ENCODE measurements at regions of chr2 and their contacts with region 1.

Region 1: DNA sequence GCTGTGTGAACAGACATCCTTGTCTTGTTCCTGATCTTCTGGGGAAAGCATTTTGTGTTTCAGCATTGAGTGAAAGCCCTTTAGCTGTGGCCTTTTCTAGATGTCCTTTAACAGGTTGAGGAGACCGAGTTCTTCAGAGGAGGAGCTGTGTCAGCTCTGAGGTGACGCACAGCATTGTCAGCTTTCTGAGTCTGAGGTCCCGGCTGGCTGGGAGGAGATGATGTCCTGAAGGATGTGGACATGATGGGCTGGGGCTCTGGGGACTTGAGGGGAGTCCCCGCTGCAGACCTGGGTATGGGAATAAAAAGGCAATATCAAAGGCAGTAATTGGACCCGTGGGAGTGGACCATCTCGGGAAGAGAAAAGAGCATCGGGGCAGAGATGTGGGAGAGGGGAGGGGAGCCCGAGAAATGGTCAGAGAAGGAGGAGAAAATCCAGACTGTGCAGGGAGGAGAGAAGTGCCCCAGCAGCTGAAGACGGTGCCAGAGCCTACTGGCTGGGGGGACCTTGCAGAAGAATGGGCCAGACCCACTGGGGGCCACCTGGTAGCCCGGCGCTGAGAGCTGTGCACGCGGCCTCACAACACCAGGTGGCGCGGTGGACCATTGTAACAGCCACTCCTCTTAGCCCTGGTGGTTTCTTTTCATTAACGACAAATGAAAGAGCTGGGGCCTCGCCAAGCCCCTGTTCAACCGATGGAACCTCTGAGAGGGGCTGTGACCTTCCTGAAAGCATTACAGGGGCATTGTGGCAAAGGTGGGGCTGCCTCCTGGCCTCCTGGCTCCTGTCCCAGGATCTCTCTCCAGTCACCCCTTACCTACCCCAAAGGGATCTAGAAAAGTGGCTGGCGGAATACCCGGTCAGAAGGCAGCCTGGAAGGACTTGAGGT is 61.6 kb downstream of the ST3GAL5 start:
- DNase-seq: peak; percentile 87
- ATAC-seq: peak; percentile 97
- H3K4me3 Mint-ChIP-seq: no peak overlapping the region; the same call in 1 of the 2 replicates
- H3K27ac Mint-ChIP-seq: no peak overlapping the region
- H3K4me1 Mint-ChIP-seq: peaks cover 13% of the 10 kb centered on the region
- H3K27me3 Mint-ChIP-seq: no peaks in the 10 kb centered on the region
- CTCF ChIP-seq: peak; percentile 62

Region 2: DNA sequence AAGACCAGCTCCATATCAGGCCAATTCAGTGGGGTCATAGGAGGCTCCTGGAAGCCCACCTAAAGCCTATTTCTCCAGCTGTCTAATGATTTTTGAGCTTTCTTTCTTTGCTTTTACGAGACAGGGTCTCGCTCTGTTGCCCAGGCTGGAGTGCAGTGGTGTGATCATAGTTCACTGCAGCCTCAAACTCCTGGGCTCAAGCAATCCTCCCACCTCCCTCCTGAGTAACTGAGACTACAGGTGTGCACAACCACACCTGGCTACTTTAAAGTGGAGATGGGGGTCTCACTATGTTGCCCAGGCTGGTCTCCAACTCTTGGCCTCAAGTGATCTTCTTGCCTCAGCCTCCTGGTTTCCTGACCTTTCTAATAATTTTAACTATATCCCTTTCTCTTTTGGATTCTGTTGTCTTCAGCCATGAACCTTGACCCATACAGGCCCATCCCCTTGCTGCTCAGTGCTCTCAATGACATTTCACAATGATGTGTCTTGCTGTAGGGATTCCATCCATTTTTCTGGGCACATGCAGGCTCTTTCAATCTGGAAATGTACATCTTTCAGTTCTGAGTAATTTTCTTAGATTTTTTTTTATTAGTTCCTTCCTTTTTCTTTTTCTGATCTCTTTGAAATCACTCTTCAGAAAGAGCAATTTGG is 103.4 kb before region 1 on chr2:
- CTCF ChIA-PET with region 1: interaction called, 24 read pairs
- POLR2A ChIA-PET with region 1: no interaction called
- DNase-seq: no peak
- ATAC-seq: no peak
- H3K4me3 Mint-ChIP-seq: no peak overlapping the region
- H3K27ac Mint-ChIP-seq: no peak overlapping the region
- H3K4me1 Mint-ChIP-seq: no peaks in the 10 kb centered on the region
- H3K27me3 Mint-ChIP-seq: no peaks in the 10 kb centered on the region; the same call in 1 of the 2 replicates
- CTCF ChIP-seq: no peak

Region 3: DNA sequence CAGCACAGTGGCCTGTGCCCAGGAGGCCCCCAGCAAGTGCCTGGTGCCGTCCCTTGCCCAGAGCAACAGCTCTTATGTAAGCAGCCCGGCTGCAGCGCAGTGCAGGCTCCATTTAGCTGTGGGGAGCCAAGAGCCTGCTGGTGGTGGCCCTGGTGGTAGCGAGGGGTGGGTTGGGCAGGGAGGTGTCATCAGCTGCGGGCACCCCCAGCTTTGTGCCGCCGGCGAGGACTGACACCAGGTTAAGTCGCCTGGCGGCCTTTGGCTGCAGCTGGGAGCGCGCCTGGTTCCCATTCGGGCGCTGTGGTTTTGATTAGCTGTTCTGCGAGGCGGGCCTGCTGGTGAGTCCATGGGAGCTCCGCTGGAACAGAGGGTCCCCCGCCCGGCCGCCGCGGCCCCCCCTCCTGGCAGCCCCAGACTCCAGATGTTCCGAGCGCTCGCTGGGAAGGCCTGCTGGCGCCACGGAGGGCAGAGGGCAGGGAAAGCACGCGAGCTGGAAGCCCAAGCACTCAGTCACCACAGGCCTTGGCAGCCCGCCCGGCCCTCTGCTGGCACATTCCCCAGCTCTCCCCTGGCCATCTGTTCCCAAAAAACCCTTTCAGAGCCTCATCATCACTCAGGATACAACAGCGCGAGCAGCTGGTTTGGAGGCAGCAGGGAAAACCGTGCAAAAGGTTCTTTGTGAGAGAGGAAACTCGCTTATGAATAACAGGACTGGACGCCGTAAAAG is 55.1 kb before region 1 on chr2:
- CTCF ChIA-PET with region 1: interaction called, 10 read pairs
- POLR2A ChIA-PET with region 1: interaction called, 3 read pairs
- DNase-seq: peak; percentile 59
- ATAC-seq: peak; percentile 51
- H3K4me3 Mint-ChIP-seq: no peak overlapping the region
- H3K27ac Mint-ChIP-seq: no peak overlapping the region
- H3K4me1 Mint-ChIP-seq: peaks cover 47% of the 10 kb centered on the region
- H3K27me3 Mint-ChIP-seq: peaks cover 26% of the 10 kb centered on the region
- CTCF ChIP-seq: no peak

Region 4: GRCh38 chr2:85846411-85846810 is 19.2 kb after region 1 on chr2:
- CTCF ChIA-PET with region 1: interaction called, 23 read pairs
- POLR2A ChIA-PET with region 1: no interaction called
- DNase-seq: no peak
- ATAC-seq: no peak
- H3K4me3 Mint-ChIP-seq: no peak overlapping the region
- H3K27ac Mint-ChIP-seq: no peak overlapping the region
- H3K4me1 Mint-ChIP-seq: no peaks in the 10 kb centered on the region
- H3K27me3 Mint-ChIP-seq: no peaks in the 10 kb centered on the region
- CTCF ChIP-seq: no peak

Region 5: DNA sequence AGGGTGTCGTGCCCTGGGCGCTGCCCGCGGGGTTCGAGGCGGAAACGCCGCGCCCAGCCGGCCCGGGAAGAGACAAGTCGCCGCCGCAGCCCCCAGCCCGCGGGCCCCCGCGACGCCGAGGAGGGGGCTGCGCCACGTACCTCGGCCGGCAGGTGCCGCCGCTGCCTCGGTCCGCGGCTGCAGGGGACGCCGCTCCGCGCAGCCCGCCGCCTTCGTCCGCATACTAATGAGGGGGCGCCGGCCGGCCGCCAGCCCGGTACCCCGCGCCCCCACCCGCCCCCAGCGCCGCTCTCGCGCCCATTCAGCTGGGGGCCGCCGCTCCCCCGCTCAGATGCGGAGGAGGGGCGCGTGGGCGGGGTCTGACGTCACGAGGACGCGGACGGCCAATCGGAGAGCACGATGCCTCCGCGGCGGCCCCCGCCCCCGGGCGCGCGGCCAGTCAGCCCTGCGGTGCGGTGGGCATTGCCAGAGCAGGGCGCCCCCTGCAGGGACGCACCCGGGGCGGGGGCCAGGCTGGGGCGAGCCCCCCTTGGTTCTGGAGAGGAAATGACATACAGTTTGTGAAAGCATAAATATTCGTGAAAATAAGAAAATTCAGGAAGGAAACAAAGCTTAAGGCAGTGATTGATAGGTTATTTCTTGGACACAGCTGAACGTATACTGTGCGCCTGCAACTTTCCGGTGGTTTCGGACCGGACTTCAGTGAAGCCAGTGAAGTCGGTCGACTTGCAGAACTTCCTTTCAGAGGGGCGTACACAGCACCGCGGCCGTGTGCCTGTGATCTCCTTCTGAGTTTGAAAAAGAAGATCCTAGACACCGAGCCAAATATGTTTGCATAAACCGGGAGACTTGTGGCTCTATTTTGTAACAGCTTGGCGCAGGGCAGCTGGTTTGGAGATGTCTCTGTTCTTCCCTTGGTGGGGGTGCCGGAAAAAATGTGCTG is 61.7 kb after region 1 on chr2 and contains the start of gene ST3GAL5:
- CTCF ChIA-PET with region 1: interaction called, 43 read pairs
- POLR2A ChIA-PET with region 1: no interaction called
- DNase-seq: peak; percentile 89
- ATAC-seq: peak; percentile 82
- H3K4me3 Mint-ChIP-seq: peak within 1 kb of the TSS; percentile 91
- H3K27ac Mint-ChIP-seq: no peak within 1 kb of the TSS
- H3K4me1 Mint-ChIP-seq: peaks cover 29% of the 10 kb centered on the region
- H3K27me3 Mint-ChIP-seq: peaks cover 29% of the 10 kb centered on the region
- CTCF ChIP-seq: no peak
- total RNA-seq, gene ST3GAL5: 5.9 to 6.8 TPM (median 6.2 TPM) in 3 replicates

Region 6: DNA sequence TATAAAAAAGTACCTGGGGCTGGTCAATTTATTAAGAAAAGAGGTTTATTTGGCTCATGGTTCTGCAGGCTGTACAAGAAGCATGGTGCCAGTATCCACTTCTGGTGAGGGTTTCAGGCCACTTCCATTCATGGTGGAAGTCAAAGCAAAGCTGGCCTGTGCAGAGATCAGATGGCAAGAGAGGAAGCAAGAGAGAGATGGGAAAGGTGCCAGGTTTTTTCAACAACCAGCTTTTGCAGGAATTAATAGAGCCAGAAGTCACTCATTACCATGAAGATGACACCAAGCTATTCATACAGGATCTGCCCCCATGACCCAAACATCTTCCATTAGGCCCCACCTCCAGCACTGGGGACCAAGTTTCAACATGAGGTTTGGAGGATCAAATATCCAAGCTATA is 118.3 kb after region 1 on chr2:
- CTCF ChIA-PET with region 1: no interaction called
- POLR2A ChIA-PET with region 1: no interaction called
- DNase-seq: no peak
- ATAC-seq: no peak
- H3K4me3 Mint-ChIP-seq: no peak overlapping the region
- H3K27ac Mint-ChIP-seq: no peak overlapping the region
- H3K4me1 Mint-ChIP-seq: no peaks in the 10 kb centered on the region
- H3K27me3 Mint-ChIP-seq: no peaks in the 10 kb centered on the region
- CTCF ChIP-seq: no peak

Region 7: DNA sequence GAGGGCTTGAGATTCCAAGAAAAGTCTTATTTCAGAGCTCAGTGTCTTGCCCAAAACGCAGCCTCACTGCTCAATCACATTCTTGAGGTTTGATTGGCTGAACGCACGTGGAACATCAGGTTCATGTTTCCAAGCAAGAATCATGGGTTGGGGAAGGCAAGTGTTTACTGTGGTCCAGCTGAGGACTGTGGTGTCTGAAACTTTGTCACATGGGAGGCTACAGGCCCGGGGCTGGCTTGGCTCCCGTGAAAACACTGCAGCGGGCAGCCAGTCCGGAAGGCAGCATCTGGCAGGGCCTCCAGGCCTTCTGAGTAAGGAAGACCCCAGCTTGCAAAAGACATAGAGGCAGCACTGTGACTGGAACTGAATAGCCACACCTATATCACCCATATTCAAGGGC is 193.8 kb after region 1 on chr2:
- CTCF ChIA-PET with region 1: interaction called, 29 read pairs
- POLR2A ChIA-PET with region 1: no interaction called
- DNase-seq: no peak
- ATAC-seq: no peak
- H3K4me3 Mint-ChIP-seq: no peak overlapping the region
- H3K27ac Mint-ChIP-seq: peak overlapping the region; percentile 14; the same call in 1 of the 2 replicates
- H3K4me1 Mint-ChIP-seq: no peaks in the 10 kb centered on the region
- H3K27me3 Mint-ChIP-seq: no peaks in the 10 kb centered on the region; the same call in 1 of the 2 replicates
- CTCF ChIP-seq: no peak

Region 8: DNA sequence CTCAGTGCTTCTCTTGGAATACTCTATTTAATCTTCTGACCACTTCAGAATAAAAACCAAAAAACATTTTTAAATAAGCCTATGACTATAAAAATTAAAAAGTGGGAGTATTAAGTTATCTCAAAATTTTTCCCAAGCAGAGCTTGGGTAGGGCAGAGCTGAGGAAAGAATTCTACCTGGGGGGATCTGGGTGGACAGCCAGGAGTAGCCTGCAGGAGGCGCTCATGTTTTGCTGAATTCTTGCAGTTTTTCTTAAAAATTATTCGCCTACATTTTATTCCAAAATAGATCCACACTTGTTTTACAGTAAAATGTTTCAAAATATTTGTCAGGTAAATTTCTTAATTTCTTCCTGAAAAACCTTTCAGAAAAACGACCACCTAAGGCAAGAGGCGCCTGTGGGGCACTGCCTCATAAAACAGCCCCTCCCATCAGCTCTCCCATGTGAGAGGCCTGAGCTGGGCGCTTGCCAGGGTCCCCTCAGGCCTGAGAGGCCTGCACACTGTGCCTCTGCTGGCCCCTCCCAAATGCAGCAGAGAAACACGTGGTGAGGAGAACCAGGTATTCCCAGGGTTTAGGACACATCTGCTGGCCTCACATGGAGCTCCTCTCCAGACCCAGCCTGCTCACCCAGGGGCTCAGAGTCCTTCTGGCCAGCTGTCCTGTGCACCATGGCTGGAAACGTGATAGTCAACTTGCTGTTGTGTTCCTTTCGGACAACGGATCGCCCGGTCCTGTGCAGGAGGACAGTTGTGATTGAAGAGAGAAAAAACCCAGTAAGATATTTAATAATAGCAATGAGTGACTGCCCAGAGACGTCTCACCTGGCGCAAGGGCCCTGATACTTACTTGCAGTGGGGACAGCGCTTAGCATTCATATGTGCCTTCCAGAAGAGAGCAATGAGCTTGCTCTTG is 261.0 kb after region 1 on chr2:
- CTCF ChIA-PET with region 1: interaction called, 17 read pairs
- POLR2A ChIA-PET with region 1: no interaction called
- DNase-seq: no peak
- ATAC-seq: peak; percentile 68
- H3K4me3 Mint-ChIP-seq: no peak overlapping the region
- H3K27ac Mint-ChIP-seq: no peak overlapping the region
- H3K4me1 Mint-ChIP-seq: no peaks in the 10 kb centered on the region
- H3K27me3 Mint-ChIP-seq: no peaks in the 10 kb centered on the region
- CTCF ChIP-seq: peak; percentile 35; the same call in 1 of the 2 replicates